IMR-90 (cell line): ENCODE measurements at regions of chr2 and their contacts with region 1.

Region 1: DNA sequence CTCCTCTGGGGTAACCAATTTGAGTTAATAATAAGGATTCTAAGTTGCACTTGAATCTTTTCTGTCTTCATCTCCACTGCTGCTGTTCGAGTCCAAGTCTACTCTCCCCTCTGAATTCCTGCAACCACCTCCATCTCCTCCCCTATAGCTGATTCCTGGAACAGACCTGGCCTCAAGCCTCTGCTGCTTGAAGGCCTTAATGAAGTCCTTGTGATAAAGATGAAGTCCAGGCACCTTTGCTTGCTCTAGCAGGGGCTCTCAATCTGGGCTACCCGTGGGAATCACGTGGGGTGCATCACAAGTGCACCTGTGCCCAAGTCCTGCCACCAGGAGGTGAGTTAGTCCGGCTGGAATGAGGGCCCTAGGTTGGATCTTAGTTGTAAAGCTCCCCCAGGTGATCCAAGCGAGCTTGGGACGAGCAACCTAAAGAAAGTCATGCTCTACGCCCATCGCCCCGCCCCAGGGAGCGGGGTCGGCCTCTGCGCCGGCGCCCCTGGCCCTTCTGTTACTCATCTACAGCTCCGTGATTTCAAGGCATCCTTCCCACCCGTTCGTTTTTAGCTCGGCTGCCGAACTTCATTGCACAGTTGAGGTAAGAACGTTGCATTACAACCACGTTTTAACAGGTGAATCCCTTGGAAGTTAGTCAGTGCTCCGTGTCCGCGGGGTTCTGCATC is 905 bp upstream of the IAH1 start:
- DNase-seq: no peak
- ATAC-seq: no peak
- H3K4me3 ChIP-seq: no peak overlapping the region
- H3K27ac ChIP-seq: no peak overlapping the region
- H3K4me1 ChIP-seq: peaks cover 12% of the 10 kb centered on the region
- H3K27me3 ChIP-seq: no peaks in the 10 kb centered on the region
- CTCF ChIP-seq: no peak
- POLR2A ChIP-seq: no peak
- RAD21 ChIP-seq: no peak

Region 2: GRCh38 chr2:9460441-9461017 is 12.9 kb before region 1 on chr2:
- CTCF ChIA-PET with region 1: no interaction called
- POLR2A ChIA-PET with region 1: interaction called, 10 read pairs
- dilution Hi-C with region 1: no loop called
- in situ Hi-C with region 1: no loop called
- intact Hi-C with region 1: no loop called
- DNase-seq: no peak
- ATAC-seq: no peak
- H3K4me3 ChIP-seq: no peak overlapping the region
- H3K27ac ChIP-seq: no peak overlapping the region
- H3K4me1 ChIP-seq: peaks cover 5% of the 10 kb centered on the region; the same call in 1 of the 2 replicates
- H3K27me3 ChIP-seq: no peaks in the 10 kb centered on the region
- CTCF ChIP-seq: no peak
- POLR2A ChIP-seq: no peak
- RAD21 ChIP-seq: no peak